SK-N-SH (cell line): ENCODE measurements at regions of chr19 and their contacts with region 1.

Region 1: DNA sequence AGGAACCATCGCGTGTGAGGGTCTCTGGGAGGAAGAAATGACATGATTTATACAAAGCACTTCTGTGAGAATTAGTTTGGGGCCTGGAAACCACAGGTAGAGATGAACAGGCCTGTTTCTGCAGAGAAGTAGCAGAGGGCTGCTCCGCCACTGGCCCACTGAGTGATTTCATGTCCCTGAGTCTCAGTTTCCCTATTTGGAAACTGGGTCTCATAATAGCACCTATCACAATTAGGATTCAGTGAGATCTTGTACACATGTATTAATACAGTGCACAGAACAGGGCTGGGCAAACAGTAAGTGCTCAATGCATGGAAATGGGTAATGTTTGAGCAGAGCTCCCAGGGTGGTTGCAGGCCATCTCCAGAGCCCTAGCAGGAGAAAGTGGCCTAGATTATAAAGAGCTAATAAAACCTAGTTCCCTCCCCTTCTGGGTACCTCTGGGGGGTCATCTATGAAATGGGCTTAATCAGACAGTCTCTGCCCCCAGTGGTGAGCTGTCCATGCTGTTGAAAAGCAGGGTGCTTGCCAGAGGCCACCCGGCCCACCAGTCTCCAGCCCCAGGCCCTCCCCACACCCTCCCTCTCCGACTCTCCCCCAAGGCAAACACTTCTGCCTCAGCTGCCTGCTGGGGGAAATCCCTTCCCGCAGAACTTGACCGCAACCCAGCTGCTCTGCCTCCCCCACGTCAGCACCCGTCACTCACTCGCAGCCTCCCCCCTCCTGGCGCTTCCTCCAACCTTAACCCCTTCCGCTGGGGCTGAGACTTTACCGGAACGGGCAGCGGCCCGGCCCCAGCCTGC is 4.5 kb downstream of the BCL3 start:
- DNase-seq: peak; percentile 68
- H3K4me3 ChIP-seq: peak overlapping the region in 1 of 2 experiments; percentile 36; a peak in 1 of 4 replicates
- H3K27ac ChIP-seq: peak overlapping the region; percentile 64 to 70; a peak in 3 of 4 replicates
- H3K4me1 ChIP-seq: peaks cover 17 to 27% of the 10 kb centered on the region in 2 experiments; a peak in 3 of 4 replicates
- H3K27me3 ChIP-seq: no peaks in the 10 kb centered on the region
- CTCF ChIP-seq: no peak
- EP300 ChIP-seq: peak; percentile 55 to 90; a peak in 2 of 4 replicates
- RAD21 ChIP-seq: no peak

Region 2: DNA sequence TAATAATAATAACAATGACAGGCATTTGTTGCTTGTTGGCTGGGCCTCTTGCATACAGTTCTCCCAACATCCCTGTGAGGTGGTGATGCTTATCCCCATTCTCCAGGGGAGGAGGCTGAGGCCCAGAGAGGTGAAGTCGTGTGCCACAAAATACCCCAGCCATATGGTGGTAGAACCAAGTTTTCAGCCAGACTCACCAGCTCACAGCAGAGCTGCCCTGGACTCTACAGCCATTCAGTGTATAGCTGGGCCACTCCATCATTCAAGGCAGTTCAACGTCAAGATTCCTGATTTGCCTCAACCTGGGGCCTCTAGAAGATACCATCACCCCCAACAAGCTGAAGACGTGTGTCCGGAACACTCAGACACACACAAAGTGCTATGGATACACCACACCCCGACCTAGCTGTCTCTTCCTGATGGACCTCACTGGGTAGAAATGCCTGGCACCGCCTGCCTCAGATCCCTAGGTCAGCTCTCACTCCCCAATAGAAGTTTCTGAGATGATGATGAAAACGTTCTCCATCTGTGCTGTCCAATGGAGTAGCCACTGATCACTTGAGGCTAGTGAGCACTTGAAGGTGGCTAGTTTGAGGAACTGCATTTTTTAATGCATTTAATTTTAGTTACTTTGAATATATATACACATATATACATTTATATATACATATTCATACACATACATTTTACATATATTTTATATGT is 86.0 kb before region 1 on chr19:
- CTCF ChIA-PET with region 1: no interaction called
- POLR2A ChIA-PET with region 1: no interaction called
- DNase-seq: no peak
- H3K4me3 ChIP-seq: no peak overlapping the region
- H3K27ac ChIP-seq: no peak overlapping the region
- H3K4me1 ChIP-seq: no peaks in the 10 kb centered on the region
- H3K27me3 ChIP-seq: no peaks in the 10 kb centered on the region
- CTCF ChIP-seq: no peak
- EP300 ChIP-seq: no peak
- RAD21 ChIP-seq: no peak

Region 3: DNA sequence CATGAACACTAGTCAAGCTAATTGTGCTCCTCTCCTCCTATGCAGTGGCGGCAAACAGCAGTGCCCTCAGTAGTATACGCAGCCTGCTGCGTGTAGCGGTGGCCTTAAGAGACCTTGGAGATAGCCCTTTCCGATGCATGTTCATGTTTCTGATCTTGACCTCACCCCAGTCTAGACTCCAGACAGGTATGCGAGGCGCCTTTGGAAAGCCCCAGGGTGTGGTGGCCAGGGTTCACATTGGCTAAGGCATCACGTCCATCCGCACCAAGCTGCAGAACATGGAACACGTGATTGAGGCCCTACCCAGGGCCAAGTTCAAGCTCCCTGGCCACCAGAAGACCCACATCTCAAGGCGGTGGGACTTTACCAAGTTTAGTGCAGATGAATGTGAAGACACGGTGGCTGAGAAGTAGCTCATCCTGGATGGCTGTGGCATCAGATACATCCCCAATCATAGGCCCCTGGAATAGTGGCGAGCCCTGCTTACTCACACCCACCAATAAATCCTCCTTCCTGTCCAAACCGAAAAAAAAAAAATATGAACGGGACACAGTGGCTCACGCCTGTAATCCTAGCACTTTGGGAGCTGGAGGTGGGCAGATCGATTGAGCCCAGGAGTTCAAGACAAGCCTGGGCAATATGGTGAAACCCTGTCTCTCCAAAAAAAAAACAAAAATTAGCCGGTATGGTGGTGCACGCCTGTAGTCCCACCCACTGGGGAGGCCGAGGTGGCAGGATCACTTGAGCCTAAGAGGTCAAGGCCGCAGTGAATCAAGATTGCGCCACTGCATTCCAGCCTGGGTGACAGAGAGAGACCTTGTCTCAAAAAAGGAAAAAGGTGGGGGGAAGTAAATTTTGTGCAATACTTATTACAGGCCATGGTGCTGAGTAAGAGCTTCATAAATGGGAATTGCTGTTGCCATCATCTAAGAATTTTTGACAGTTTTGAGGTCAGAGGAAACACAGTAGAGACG is 12.2 kb after region 1 on chr19:
- CTCF ChIA-PET with region 1: interaction called, 35 read pairs
- POLR2A ChIA-PET with region 1: no interaction called
- DNase-seq: no peak
- H3K4me3 ChIP-seq: no peak overlapping the region
- H3K27ac ChIP-seq: no peak overlapping the region
- H3K4me1 ChIP-seq: no peaks in the 10 kb centered on the region
- H3K27me3 ChIP-seq: no peaks in the 10 kb centered on the region
- CTCF ChIP-seq: no peak
- EP300 ChIP-seq: no peak
- RAD21 ChIP-seq: no peak